ENCODE measurements at regions of chr12 and their contacts with region 1.

Region 1: GRCh38 chr12:79407671-79408622 is 282.8 kb downstream of the PAWR start:
- DNase-seq: peak; percentile 64
- ATAC-seq: peak; percentile 99
- H3K4me3 ChIP-seq: no peak overlapping the region
- H3K27ac ChIP-seq: no peak overlapping the region; the same call in 1 of the 2 replicates
- H3K4me1 ChIP-seq: peaks cover 6% of the 10 kb centered on the region; the same call in 1 of the 2 replicates
- H3K27me3 ChIP-seq: no peaks in the 10 kb centered on the region
- CTCF ChIP-seq: peak; percentile 85

Region 2: DNA sequence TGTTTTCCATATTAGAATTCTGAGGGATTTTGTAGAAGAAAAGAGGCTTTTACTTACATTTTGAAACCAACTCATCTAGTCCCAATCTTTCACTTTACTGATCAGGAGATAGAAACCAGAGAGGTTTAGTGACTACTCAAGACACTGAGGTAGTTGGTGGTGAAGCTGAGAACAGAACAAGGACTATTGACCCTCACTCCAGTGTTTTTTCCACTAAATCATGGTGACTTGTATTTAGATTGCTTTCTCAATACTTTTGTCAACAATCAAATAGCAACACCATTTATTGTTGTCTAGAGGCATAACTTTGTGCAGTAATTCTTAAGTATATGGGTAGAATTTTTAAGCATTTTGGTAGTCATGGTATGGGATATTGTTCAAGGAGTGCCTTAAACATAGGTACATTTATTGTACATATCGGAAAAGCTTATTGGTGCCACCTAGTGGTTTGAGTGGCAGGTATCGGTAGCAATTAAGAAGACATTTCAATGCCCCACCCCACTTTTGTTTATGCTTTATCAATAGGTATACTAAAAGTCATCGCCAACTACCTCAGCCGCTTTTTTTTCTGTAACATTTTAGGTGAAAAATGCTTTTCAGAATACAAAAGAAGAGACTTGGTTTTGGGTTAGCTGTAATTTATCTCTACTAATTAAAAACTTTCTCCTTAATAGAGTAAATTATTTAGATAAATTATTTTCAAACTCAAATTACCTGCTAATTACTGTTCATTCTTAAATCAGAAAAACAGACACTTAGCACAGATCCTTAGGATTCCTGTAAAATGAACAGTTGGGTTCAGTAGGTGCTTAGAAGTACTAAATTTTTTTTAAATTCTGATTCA is 330.1 kb after region 1 on chr12:
- CTCF ChIA-PET with region 1: interaction called, 7 read pairs
- POLR2A ChIA-PET with region 1: no interaction called
- in situ Hi-C with region 1: no loop called
- intact Hi-C with region 1: loop called (anchors 5 kb)
- DNase-seq: peak; percentile 27
- ATAC-seq: peak; percentile 90
- H3K4me3 ChIP-seq: no peak overlapping the region
- H3K27ac ChIP-seq: peak overlapping the region; percentile 25; the same call in 1 of the 2 replicates
- H3K4me1 ChIP-seq: no peaks in the 10 kb centered on the region
- H3K27me3 ChIP-seq: no peaks in the 10 kb centered on the region
- CTCF ChIP-seq: peak; percentile 73; the same call in 1 of the 2 replicates

Region 3: DNA sequence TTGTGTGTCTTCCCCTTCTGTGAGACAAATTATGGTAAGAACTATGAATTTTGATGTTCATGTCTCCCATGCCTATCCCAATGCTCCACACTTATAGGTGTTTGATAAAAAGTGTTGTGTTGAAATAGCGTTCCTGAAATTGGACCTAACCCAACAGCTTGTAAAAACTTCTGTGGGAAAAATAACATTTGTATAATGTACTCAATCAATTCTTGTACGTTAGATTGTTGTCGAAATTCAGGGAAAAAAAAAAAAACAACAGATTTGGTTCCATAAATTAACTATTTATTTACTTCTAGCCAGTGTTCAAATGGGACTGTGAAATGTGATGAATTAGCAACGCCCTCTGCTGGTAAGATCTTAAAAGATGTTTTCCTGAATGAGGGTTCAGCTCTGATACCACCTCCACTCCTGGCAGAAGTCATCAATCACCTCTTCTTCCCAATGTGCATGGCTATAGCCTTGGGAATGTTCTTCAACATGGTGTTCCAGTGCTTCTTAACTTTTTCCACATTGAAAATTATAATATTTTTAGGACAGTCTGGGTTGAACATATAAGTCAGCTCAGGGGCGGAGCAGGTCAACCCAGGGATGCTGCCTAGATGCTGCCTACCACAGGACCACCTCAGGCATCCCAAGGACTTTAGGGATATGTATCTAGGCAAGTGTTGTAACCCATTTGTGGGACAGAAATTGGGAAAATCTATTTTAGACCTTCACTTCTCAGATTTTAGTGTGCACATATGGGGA is 862.0 kb after region 1 on chr12:
- CTCF ChIA-PET with region 1: no interaction called
- POLR2A ChIA-PET with region 1: no interaction called
- in situ Hi-C with region 1: no loop called
- intact Hi-C with region 1: loop called (anchors 10 kb)
- DNase-seq: peak; percentile 24
- ATAC-seq: peak; percentile 73; the same call in 1 of the 2 replicates
- H3K4me3 ChIP-seq: no peak overlapping the region
- H3K27ac ChIP-seq: no peak overlapping the region
- H3K4me1 ChIP-seq: 0 out of 2 replicates have a peak, but pooled peaks cover 2% of the 10 kb centered on the region
- H3K27me3 ChIP-seq: no peaks in the 10 kb centered on the region
- CTCF ChIP-seq: peak; percentile 76